Calu3 (cell line): ENCODE measurements at regions of chr12 and their contacts with region 1.

Region 1: GRCh38 chr12:47038270-47038748 is 41.1 kb upstream of the PCED1B start:
- DNase-seq: peak; percentile 12
- H3K4me3 Mint-ChIP-seq: peak overlapping the region; percentile 27
- H3K27ac Mint-ChIP-seq: peak overlapping the region; percentile 96
- H3K4me1 Mint-ChIP-seq: peaks cover 42% of the 10 kb centered on the region
- H3K27me3 Mint-ChIP-seq: no peaks in the 10 kb centered on the region
- CTCF ChIP-seq: no peak

Region 2: GRCh38 chr12:47276621-47277309 is 238.5 kb after region 1 on chr12:
- CTCF ChIA-PET with region 1: no interaction called
- intact Hi-C with region 1: loop called (anchors 2 kb)
- DNase-seq: peak; percentile 64
- H3K4me3 Mint-ChIP-seq: peak overlapping the region; percentile 8
- H3K27ac Mint-ChIP-seq: peak overlapping the region; percentile 81
- H3K4me1 Mint-ChIP-seq: peaks cover 50% of the 10 kb centered on the region
- H3K27me3 Mint-ChIP-seq: no peaks in the 10 kb centered on the region
- CTCF ChIP-seq: no peak